CD4-positive, alpha-beta T cell (primary cell): ENCODE measurements at regions of chr21 and their contacts with region 1.

Region 1: GRCh38 chr21:33441489-33442477 is 38.0 kb downstream of the TMEM50B start:
- DNase-seq: no peak
- ATAC-seq: no peak
- H3K4me3 ChIP-seq: no peak overlapping the region
- H3K4me3 Mint-ChIP-seq: no peak overlapping the region
- H3K27ac ChIP-seq: no peak overlapping the region
- H3K27ac Mint-ChIP-seq: no peak overlapping the region
- H3K4me1 ChIP-seq: no peaks in the 10 kb centered on the region
- H3K4me1 Mint-ChIP-seq: peaks cover 5% of the 10 kb centered on the region
- H3K27me3 ChIP-seq: no peaks in the 10 kb centered on the region
- H3K27me3 Mint-ChIP-seq: no peaks in the 10 kb centered on the region
- CTCF ChIP-seq: no peak

Region 2: GRCh38 chr21:32834916-32835235 is 606.9 kb before region 1 on chr21:
- CTCF ChIA-PET with region 1: no interaction called
- POLR2A ChIA-PET with region 1: no interaction called
- intact Hi-C with region 1: loop called (anchors 5 kb)
- DNase-seq: no peak
- ATAC-seq: no peak
- H3K4me3 ChIP-seq: no peak overlapping the region
- H3K4me3 Mint-ChIP-seq: no peak overlapping the region
- H3K27ac ChIP-seq: no peak overlapping the region
- H3K27ac Mint-ChIP-seq: no peak overlapping the region
- H3K4me1 ChIP-seq: no peaks in the 10 kb centered on the region
- H3K4me1 Mint-ChIP-seq: no peaks in the 10 kb centered on the region
- H3K27me3 ChIP-seq: peaks cover 5 to 7% of the 10 kb centered on the region in 2 experiments
- H3K27me3 Mint-ChIP-seq: peaks cover 27% of the 10 kb centered on the region
- CTCF ChIP-seq: no peak

Region 3: DNA sequence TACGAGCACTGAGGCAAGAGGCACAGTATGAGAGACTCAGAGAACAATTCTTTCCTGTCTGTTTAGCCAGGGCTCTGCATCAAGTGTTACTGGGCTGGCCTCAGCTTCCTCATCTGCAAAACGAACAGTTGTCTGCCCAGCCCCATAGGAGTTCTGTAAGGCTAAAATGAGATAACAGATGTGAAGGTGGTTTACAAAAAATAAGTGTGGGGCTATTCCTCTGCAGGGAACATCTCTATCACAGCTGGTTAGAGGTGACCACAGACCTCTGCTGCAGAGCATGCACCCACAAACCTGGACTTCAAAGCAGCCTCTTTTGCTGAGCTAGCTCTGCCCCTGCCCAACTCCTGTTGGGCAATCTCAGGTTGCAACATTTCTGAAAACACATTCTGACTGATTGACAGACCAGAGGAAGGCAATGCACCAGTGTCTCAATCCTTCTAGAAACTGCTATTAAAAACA is 382.4 kb before region 1 on chr21:
- CTCF ChIA-PET with region 1: no interaction called
- POLR2A ChIA-PET with region 1: no interaction called
- intact Hi-C with region 1: no loop called
- DNase-seq: peak in 3 of 14 experiments; percentile 20 to 62 (median 62)
- ATAC-seq: no peak
- H3K4me3 ChIP-seq: no peak overlapping the region
- H3K4me3 Mint-ChIP-seq: no peak overlapping the region
- H3K27ac ChIP-seq: no peak overlapping the region
- H3K27ac Mint-ChIP-seq: no peak overlapping the region
- H3K4me1 ChIP-seq: peaks cover 3% of the 10 kb centered on the region
- H3K4me1 Mint-ChIP-seq: no peaks in the 10 kb centered on the region
- H3K27me3 ChIP-seq: peaks cover 6 to 13% of the 10 kb centered on the region in 2 experiments
- H3K27me3 Mint-ChIP-seq: peaks cover 41% of the 10 kb centered on the region
- CTCF ChIP-seq: no peak

Region 4: GRCh38 chr21:33127154-33127893 is 314.5 kb before region 1 on chr21:
- CTCF ChIA-PET with region 1: no interaction called
- POLR2A ChIA-PET with region 1: interaction called, 3 read pairs
- intact Hi-C with region 1: loop called in 1 of 2 experiments (anchors 10 kb)
- DNase-seq: peak; percentile 28 to 75 (median 50)
- ATAC-seq: peak; percentile 60
- H3K4me3 ChIP-seq: peak overlapping the region; percentile 40
- H3K4me3 Mint-ChIP-seq: peak overlapping the region; percentile 77
- H3K27ac ChIP-seq: no peak overlapping the region
- H3K27ac Mint-ChIP-seq: no peak overlapping the region
- H3K4me1 ChIP-seq: peaks cover 7% of the 10 kb centered on the region
- H3K4me1 Mint-ChIP-seq: peaks cover 14% of the 10 kb centered on the region
- H3K27me3 ChIP-seq: peaks cover 0 to 3% of the 10 kb centered on the region in 2 experiments
- H3K27me3 Mint-ChIP-seq: peaks cover 30% of the 10 kb centered on the region
- CTCF ChIP-seq: peak; percentile 73

Region 5: DNA sequence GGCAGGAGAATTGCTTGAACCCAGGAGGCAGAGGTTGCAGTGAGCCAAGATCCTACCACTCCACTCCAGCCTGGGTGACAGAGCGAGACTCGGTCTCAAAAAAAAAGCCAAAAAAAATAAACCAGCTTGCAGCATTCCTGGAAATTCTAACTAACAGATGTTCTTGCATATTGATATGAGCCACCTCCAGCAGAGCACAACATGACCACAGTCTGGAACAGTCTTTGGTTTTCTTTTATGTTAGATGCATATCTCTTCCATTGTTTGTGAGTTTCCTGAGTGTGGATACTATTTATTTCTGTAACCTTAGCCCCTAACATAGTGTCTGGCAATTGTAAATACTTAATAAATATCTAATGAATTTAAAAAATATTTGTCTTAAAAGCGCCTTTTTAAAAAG is 93.1 kb before region 1 on chr21:
- CTCF ChIA-PET with region 1: interaction called, 9 read pairs
- POLR2A ChIA-PET with region 1: no interaction called
- intact Hi-C with region 1: loop called in 1 of 2 experiments (anchors 1 kb)
- DNase-seq: no peak
- ATAC-seq: no peak
- H3K4me3 ChIP-seq: no peak overlapping the region
- H3K4me3 Mint-ChIP-seq: no peak overlapping the region
- H3K27ac ChIP-seq: no peak overlapping the region
- H3K27ac Mint-ChIP-seq: peak overlapping the region; percentile 84
- H3K4me1 ChIP-seq: no peaks in the 10 kb centered on the region
- H3K4me1 Mint-ChIP-seq: peaks cover 23% of the 10 kb centered on the region
- H3K27me3 ChIP-seq: no peaks in the 10 kb centered on the region
- H3K27me3 Mint-ChIP-seq: no peaks in the 10 kb centered on the region
- CTCF ChIP-seq: no peak

Region 6: DNA sequence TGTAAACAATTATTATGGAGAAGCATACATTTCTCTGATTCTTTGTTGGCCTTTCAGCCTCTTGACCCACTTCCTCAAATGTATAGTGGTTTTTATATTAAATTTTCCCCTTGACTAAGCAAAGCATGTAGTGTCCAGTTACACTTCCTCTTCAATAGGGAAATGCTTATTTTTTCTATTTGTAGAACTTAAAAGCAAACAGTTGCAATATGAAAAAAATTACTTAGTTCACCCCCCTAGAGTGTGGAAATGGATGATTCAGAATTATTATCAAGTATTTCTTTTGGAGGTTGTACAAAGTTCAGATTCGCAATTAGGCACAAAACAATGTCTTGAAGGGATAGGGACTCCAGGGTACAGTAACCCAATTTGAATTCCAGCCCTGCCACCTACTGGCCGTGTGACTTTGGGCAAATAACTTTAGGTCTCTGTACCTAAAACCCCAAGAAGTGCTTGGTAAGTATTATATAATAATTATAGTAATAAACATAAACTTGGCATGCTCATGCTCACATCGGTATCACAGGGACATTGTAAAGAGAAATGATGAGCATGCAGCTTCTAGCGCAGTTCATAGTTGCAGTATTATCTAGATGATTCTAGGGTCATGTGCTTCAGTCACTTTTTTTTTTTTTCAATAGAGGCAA is 67.2 kb before region 1 on chr21:
- CTCF ChIA-PET with region 1: no interaction called
- POLR2A ChIA-PET with region 1: no interaction called
- intact Hi-C with region 1: loop called in 1 of 2 experiments (anchors 2 kb)
- DNase-seq: peak; percentile 40 to 81 (median 54)
- ATAC-seq: peak; percentile 87
- H3K4me3 ChIP-seq: no peak overlapping the region
- H3K4me3 Mint-ChIP-seq: no peak overlapping the region
- H3K27ac ChIP-seq: no peak overlapping the region
- H3K27ac Mint-ChIP-seq: no peak overlapping the region
- H3K4me1 ChIP-seq: peaks cover 16% of the 10 kb centered on the region
- H3K4me1 Mint-ChIP-seq: peaks cover 7% of the 10 kb centered on the region
- H3K27me3 ChIP-seq: no peaks in the 10 kb centered on the region
- H3K27me3 Mint-ChIP-seq: no peaks in the 10 kb centered on the region
- CTCF ChIP-seq: peak; percentile 77

Region 7: DNA sequence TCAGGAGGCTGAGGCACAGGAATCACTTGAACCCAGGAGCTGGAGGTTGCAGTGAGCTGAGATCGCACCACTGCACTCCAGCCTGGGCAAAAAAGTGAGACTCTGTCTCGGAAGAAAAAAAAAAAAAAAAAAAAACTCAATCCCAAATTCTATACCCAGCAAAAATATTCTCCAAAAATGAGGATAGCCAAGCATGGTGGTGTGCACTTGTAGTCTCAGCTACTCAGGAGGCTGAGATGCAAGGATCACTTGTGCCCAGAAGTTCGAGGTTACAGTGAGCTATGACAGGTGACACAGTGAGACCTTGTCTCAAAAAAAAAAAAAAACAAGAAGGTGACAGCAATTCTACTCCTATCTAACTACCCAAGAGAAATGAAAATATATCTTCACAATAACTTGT is 31.6 kb after region 1 on chr21:
- CTCF ChIA-PET with region 1: no interaction called
- POLR2A ChIA-PET with region 1: no interaction called
- intact Hi-C with region 1: no loop called
- DNase-seq: no peak
- ATAC-seq: no peak
- H3K4me3 ChIP-seq: no peak overlapping the region
- H3K4me3 Mint-ChIP-seq: no peak overlapping the region
- H3K27ac ChIP-seq: no peak overlapping the region
- H3K27ac Mint-ChIP-seq: no peak overlapping the region
- H3K4me1 ChIP-seq: peaks cover 10% of the 10 kb centered on the region
- H3K4me1 Mint-ChIP-seq: peaks cover 24% of the 10 kb centered on the region
- H3K27me3 ChIP-seq: no peaks in the 10 kb centered on the region
- H3K27me3 Mint-ChIP-seq: no peaks in the 10 kb centered on the region
- CTCF ChIP-seq: no peak